ENCODE measurements at regions of chr12 and their contacts with region 1.

Region 1: GRCh38 chr12:70242695-70243509 is at the start of gene CNOT2:
- DNase-seq: peak; percentile 93
- ATAC-seq: peak; percentile 91
- H3K4me3 ChIP-seq: peak within 1 kb of the TSS; percentile 84
- H3K27ac ChIP-seq: peak within 1 kb of the TSS; percentile 92
- H3K4me1 ChIP-seq: peaks cover 2% of the 10 kb centered on the region; the same call in 1 of the 2 replicates
- H3K27me3 ChIP-seq: no peaks in the 10 kb centered on the region
- CTCF ChIP-seq: no peak
- POLR2A ChIP-seq: peak; percentile 84
- RAD21 ChIP-seq: no peak
- total RNA-seq, gene CNOT2: 159 and 186 TPM in 2 replicates

Region 2: DNA sequence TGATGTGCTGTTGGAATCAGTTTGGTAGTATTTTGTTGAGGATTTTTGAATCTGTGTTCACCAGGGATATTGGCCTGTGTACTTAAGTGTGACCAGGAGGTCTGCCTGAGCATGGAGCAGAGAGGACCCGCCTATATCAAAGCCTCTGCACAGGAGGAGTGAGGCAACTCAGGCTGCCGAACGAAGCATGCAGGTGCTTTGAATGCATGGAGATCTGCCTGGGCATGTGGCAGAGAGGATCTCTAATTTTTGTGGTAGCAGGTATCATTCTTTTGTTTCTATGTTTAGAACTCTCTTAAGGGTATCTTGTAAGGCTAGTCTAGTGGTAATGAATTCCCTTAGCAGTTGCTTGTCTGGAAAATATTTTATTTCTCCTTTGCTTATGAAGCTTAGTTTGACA is 477.4 kb before region 1 on chr12:
- CTCF ChIA-PET with region 1: no interaction called
- POLR2A ChIA-PET with region 1: no interaction called
- dilution Hi-C with region 1: no loop called
- in situ Hi-C with region 1: no loop called
- intact Hi-C with region 1: no loop called
- DNase-seq: no peak
- ATAC-seq: no peak
- H3K4me3 ChIP-seq: no peak overlapping the region
- H3K27ac ChIP-seq: no peak overlapping the region
- H3K4me1 ChIP-seq: no peaks in the 10 kb centered on the region
- H3K27me3 ChIP-seq: no peaks in the 10 kb centered on the region
- CTCF ChIP-seq: no peak
- POLR2A ChIP-seq: no peak
- RAD21 ChIP-seq: no peak

Region 3: DNA sequence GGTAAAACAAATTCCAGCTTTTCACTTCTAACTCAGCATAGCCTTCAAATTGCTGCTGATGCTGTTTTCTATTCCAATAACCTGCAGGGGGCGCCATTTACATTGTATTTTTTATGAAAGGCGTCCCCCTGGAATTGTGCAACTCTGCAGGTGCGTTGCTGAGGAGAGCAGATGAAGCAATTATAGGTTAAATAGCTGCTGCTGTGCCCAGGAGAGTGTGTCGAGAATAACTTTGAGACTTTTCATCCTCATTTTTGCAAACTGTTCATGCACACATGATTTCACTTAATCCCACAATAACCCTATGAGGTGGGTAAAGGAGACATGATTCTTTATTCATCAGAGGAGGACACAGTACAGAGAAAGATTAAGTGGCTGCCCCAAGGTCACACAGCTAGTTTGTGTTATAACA is 342.2 kb before region 1 on chr12:
- CTCF ChIA-PET with region 1: no interaction called
- POLR2A ChIA-PET with region 1: no interaction called
- dilution Hi-C with region 1: no loop called
- in situ Hi-C with region 1: loop called (anchors 10 kb)
- intact Hi-C with region 1: loop called (anchors 1 kb)
- DNase-seq: peak; percentile 54
- ATAC-seq: no peak
- H3K4me3 ChIP-seq: no peak overlapping the region
- H3K27ac ChIP-seq: no peak overlapping the region
- H3K4me1 ChIP-seq: peaks cover 2% of the 10 kb centered on the region; the same call in 1 of the 2 replicates
- H3K27me3 ChIP-seq: no peaks in the 10 kb centered on the region
- CTCF ChIP-seq: peak; percentile 78
- POLR2A ChIP-seq: no peak
- RAD21 ChIP-seq: peak; percentile 74

Region 4: GRCh38 chr12:69985656-69986055 is 257.2 kb before region 1 on chr12:
- CTCF ChIA-PET with region 1: no interaction called
- POLR2A ChIA-PET with region 1: no interaction called
- dilution Hi-C with region 1: no loop called
- in situ Hi-C with region 1: no loop called
- intact Hi-C with region 1: loop called (anchors 1 kb)
- DNase-seq: no peak
- ATAC-seq: no peak
- H3K4me3 ChIP-seq: no peak overlapping the region
- H3K27ac ChIP-seq: no peak overlapping the region
- H3K4me1 ChIP-seq: peaks cover 9% of the 10 kb centered on the region
- H3K27me3 ChIP-seq: no peaks in the 10 kb centered on the region
- CTCF ChIP-seq: no peak
- POLR2A ChIP-seq: no peak
- RAD21 ChIP-seq: no peak

Region 5: GRCh38 chr12:70178038-70178437 is 64.9 kb before region 1 on chr12:
- CTCF ChIA-PET with region 1: no interaction called
- POLR2A ChIA-PET with region 1: no interaction called
- dilution Hi-C with region 1: no loop called
- in situ Hi-C with region 1: no loop called
- intact Hi-C with region 1: no loop called
- DNase-seq: no peak
- ATAC-seq: no peak
- H3K4me3 ChIP-seq: no peak overlapping the region
- H3K27ac ChIP-seq: no peak overlapping the region
- H3K4me1 ChIP-seq: no peaks in the 10 kb centered on the region
- H3K27me3 ChIP-seq: no peaks in the 10 kb centered on the region
- CTCF ChIP-seq: no peak
- POLR2A ChIP-seq: no peak
- RAD21 ChIP-seq: no peak

Region 6: DNA sequence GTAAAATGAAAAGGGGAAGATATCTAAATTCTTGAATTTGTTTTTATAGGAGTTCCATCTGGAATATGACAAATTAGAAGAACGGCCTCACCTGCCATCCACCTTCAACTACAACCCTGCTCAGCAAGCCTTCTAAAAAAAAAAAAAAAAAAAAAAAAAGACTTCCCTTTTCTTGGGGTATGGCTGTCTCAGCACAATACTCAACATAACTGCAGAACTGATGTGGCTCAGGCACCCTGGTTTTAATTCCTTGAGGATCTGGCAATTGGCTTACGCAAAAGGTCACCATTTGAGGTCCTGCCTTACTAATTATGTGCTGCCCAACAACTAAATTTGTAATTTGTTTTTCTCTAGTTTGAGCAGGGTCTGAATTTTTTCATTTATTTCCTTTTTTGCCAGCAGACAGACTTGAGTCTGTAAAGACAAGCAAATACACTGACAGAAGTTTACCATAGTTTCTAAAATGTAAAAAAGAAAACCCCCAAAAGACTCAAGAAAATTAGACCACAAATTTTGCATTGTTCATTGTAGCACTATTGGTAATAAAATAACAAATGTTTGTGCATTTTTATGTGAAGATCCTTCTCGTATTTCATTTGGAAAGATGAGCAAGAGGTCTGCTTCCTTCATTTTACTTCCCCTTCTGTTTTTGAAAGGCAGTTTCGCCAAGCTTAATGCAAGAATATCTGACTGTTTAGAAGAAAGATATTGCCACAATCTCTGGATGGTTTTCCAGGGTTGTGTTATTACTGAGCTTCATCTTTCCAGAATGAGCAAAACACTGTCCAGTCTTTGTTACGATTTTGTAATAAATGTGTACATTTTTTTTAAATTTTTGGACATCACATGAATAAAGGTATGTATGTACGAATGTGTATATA is 111.1 kb after region 1 on chr12:
- CTCF ChIA-PET with region 1: no interaction called
- POLR2A ChIA-PET with region 1: no interaction called
- dilution Hi-C with region 1: no loop called
- in situ Hi-C with region 1: no loop called
- intact Hi-C with region 1: loop called (anchors 5 kb)
- DNase-seq: no peak
- ATAC-seq: no peak
- H3K4me3 ChIP-seq: no peak overlapping the region
- H3K27ac ChIP-seq: no peak overlapping the region
- H3K4me1 ChIP-seq: no peaks in the 10 kb centered on the region
- H3K27me3 ChIP-seq: no peaks in the 10 kb centered on the region
- CTCF ChIP-seq: no peak
- POLR2A ChIP-seq: no peak
- RAD21 ChIP-seq: no peak

Region 7: GRCh38 chr12:70365648-70366518 is 123.0 kb after region 1 on chr12 and contains the start of gene KCNMB4:
- CTCF ChIA-PET with region 1: no interaction called
- POLR2A ChIA-PET with region 1: no interaction called
- dilution Hi-C with region 1: no loop called
- in situ Hi-C with region 1: no loop called
- intact Hi-C with region 1: loop called (anchors 2 kb)
- DNase-seq: peak; percentile 10
- ATAC-seq: peak; percentile 92
- H3K4me3 ChIP-seq: peak within 1 kb of the TSS; percentile 85
- H3K27ac ChIP-seq: no peak within 1 kb of the TSS
- H3K4me1 ChIP-seq: peaks cover 3% of the 10 kb centered on the region; the same call in 1 of the 2 replicates
- H3K27me3 ChIP-seq: peaks cover 15% of the 10 kb centered on the region; the same call in 1 of the 2 replicates
- CTCF ChIP-seq: no peak
- POLR2A ChIP-seq: no peak
- RAD21 ChIP-seq: no peak
- total RNA-seq, gene KCNMB4: 0.90 and 1.4 TPM in 2 replicates

Region 8: GRCh38 chr12:70576346-70577282 is 333.7 kb after region 1 on chr12:
- CTCF ChIA-PET with region 1: no interaction called
- POLR2A ChIA-PET with region 1: no interaction called
- dilution Hi-C with region 1: no loop called
- in situ Hi-C with region 1: no loop called
- intact Hi-C with region 1: loop called (anchors 5 kb)
- DNase-seq: peak; percentile 85
- ATAC-seq: peak; percentile 90
- H3K4me3 ChIP-seq: no peak overlapping the region
- H3K27ac ChIP-seq: no peak overlapping the region
- H3K4me1 ChIP-seq: no peaks in the 10 kb centered on the region
- H3K27me3 ChIP-seq: no peaks in the 10 kb centered on the region
- CTCF ChIP-seq: peak; percentile 93
- POLR2A ChIP-seq: peak; percentile 51
- RAD21 ChIP-seq: peak; percentile 96

Region 9: DNA sequence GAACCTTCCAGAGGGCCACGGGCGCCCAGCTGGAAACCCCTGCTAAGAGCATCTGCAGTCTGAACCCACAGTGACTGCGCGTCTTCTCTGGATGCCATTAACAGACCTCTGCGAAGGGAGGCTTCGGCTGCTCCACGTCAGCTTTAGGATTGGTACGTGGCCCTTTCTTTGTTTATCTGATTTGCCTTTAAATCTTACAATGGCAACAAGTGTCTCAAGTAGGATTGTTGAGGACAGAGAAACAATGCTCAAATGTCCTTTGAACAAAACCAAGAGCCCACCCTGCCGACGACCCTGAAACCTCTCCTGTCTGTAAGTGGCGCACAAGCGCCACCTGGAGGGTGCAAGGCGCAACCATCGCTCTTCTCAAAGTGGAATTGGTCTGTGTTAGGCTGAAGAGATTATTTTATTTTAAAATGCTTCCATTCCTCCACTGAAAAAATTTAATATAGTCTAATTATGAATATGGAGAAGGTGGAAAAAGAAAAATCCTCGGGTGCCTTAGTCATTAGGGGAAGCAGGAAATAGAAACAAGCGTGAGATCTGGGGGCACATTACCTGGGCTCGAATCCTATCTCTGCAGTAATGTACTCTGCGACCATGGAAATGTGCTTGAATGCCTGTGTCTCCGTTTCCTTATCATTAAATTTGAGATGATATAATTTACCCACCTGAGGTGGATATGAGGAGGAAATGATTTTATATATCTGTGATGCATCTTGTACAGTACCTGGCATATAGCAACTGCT is 476.9 kb after region 1 on chr12:
- CTCF ChIA-PET with region 1: no interaction called
- POLR2A ChIA-PET with region 1: no interaction called
- dilution Hi-C with region 1: no loop called
- in situ Hi-C with region 1: no loop called
- intact Hi-C with region 1: loop called (anchors 10 kb)
- DNase-seq: peak; percentile 36
- ATAC-seq: peak; percentile 85
- H3K4me3 ChIP-seq: peak overlapping the region; percentile 52
- H3K27ac ChIP-seq: no peak overlapping the region
- H3K4me1 ChIP-seq: no peaks in the 10 kb centered on the region
- H3K27me3 ChIP-seq: no peaks in the 10 kb centered on the region
- CTCF ChIP-seq: peak; percentile 91
- POLR2A ChIP-seq: no peak
- RAD21 ChIP-seq: peak; percentile 93